Esophagus muscularis mucosa (tissue), 4 donors: ENCODE measurements at regions of chr19 and their contacts with region 1.

Region 1: DNA sequence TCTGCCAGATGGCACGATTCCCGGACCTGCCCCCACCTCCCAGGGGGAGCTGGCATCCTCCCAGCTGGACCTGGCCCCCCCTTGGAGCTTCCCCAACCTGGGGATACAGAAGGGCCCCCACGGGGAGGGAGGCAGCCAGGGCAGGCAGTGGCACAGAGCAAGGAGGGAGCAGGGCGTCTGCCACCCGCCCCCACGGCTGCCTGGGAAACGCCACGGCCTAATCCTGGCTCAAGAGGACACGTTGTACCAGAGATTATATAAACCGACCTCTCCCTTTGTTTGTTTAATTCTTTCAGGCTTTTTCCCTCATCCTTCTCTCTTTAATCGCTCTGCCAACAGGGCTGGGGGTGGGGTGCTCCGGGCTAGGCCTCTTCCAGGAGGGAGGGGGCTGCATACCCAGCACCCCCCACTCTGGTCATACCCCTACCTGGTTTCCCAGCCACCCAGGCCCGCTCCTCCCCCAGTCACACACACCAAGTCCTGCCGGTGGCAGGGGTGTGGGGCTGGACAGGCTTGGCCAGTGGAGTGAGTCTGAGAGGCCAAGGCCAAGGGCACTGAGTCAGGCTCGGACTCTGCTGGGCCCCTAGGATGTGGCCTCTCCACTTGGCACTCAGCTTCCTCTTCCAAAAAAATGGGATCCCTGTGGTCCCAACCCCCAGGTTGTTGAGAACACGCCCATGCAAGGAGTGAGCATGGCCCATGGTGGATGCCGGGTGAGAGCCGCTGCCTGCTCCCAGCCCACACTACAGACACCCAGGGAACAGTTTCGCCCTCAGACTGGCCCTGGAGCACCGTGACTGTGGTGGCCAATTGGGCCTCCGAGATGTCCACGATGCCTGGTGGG is 29.5 kb upstream of the NFIC start:
- DNase-seq: peak; percentile 97
- H3K4me3 ChIP-seq: peak overlapping the region in 2 of 4 donors; percentile 11 to 24
- H3K27ac ChIP-seq: peak overlapping the region; percentile 86 to 97 (median 94)
- H3K4me1 ChIP-seq: peaks cover 47 to 80% (median 72%) of the 10 kb centered on the region in 4 donors
- H3K27me3 ChIP-seq: no peaks in the 10 kb centered on the region
- CTCF ChIP-seq: peak in 1 of 3 experiments; percentile 1
- EP300 ChIP-seq: peak; percentile 99
- POLR2A ChIP-seq: no peak

Region 2: DNA sequence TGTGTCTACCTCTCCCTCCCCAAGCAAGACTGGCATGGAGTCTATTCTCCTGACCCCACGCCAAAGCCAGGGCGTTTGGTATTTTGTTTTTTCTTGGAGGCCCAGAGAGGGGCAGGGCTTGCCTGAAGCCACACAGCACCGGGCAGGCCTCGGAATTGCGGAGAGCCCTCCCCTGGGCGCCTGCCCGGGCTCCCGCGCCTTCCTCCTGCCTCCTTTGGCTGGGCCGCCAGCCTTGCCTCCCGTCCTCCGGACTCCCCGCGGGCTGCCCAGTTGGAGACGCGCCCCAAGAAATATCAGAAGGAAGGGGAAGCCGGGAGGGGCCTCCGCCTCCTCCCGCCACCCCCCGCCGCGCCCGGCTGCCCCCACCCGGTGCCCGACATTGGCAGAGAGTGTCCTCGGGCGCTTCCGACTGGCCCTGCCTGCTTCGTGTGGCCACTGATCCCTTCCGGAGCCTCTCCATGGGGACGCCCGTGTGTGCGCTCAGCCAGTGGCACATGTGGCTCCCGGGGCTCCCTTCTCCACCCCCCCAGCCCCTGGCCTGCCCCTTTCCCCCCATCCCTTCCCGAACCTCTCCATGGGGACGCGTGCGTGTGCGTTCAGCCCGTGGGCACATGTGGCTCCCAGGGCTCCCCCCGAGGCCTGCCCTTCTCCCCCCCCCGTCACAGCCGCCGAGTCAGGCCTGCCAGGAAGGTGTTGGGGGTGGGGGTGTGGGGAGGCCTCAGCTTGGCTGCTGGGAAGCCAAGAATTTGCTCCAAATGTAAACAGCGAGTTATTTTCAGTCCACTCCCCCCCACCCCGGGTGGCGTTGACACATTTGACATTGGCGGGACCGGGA is 66.8 kb after region 1 on chr19:
- intact Hi-C with region 1: loop called (anchors 10 kb)
- DNase-seq: peak; percentile 98
- H3K4me3 ChIP-seq: peak overlapping the region; percentile 51 to 61 (median 56)
- H3K27ac ChIP-seq: peak overlapping the region; percentile 95 to 100 (median 99)
- H3K4me1 ChIP-seq: peaks cover 70 to 100% (median 99%) of the 10 kb centered on the region in 4 donors
- H3K27me3 ChIP-seq: no peaks in the 10 kb centered on the region
- CTCF ChIP-seq: no peak
- EP300 ChIP-seq: peak; percentile 99
- POLR2A ChIP-seq: no peak

Region 3: DNA sequence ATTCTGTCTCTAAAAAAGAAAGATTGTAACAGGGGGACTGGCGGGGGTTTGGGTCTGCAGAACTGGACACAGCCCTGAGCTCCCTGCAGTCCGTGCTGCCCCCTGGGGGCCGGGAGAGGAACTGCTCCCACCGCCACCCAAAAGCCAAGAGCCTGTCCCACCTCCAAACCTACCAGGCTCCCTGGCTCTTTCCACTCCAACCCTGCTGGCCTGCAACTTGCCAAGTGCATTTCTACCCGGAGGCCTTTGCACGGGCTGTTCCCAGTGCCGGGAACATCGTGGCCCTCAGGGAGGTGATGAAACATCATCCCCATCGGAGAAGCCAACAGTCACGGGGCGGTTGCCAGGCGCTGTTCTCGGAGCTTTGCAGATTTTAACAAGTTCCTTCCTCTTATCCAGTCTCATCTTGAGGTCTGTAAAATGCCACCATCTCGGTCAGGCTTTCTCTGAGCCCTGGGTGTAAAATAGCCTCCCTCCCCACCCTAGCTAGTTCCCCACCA is 92.7 kb after region 1 on chr19:
- intact Hi-C with region 1: loop called (anchors 2 kb)
- DNase-seq: peak; percentile 99
- H3K4me3 ChIP-seq: peak overlapping the region in 2 of 4 donors; percentile 4 to 16
- H3K27ac ChIP-seq: peak overlapping the region; percentile 93 to 97 (median 96)
- H3K4me1 ChIP-seq: peaks cover 59 to 100% (median 98%) of the 10 kb centered on the region in 4 donors
- H3K27me3 ChIP-seq: no peaks in the 10 kb centered on the region
- CTCF ChIP-seq: peak; percentile 99 to 100 (median 100)
- EP300 ChIP-seq: peak; percentile 100
- POLR2A ChIP-seq: no peak